HepG2 (cell line): ENCODE measurements at regions of chrX and their contacts with region 1.

Region 1: GRCh38 chrX:24241822-24242648 is 71.8 kb downstream of the SUPT20HL2 start:
- DNase-seq: peak; percentile 31
- ATAC-seq: peak; percentile 78
- H3K4me3 ChIP-seq: peak overlapping the region in 1 of 3 experiments; percentile 41; a peak in 1 of 6 replicates
- H3K27ac ChIP-seq: no peak overlapping the region
- H3K4me1 ChIP-seq: peaks cover 38% of the 10 kb centered on the region
- H3K27me3 ChIP-seq: no peaks in the 10 kb centered on the region
- CTCF ChIP-seq: peak; percentile 56
- EP300 ChIP-seq: no peak
- POLR2A ChIP-seq: no peak
- RAD21 ChIP-seq: no peak

Region 2: DNA sequence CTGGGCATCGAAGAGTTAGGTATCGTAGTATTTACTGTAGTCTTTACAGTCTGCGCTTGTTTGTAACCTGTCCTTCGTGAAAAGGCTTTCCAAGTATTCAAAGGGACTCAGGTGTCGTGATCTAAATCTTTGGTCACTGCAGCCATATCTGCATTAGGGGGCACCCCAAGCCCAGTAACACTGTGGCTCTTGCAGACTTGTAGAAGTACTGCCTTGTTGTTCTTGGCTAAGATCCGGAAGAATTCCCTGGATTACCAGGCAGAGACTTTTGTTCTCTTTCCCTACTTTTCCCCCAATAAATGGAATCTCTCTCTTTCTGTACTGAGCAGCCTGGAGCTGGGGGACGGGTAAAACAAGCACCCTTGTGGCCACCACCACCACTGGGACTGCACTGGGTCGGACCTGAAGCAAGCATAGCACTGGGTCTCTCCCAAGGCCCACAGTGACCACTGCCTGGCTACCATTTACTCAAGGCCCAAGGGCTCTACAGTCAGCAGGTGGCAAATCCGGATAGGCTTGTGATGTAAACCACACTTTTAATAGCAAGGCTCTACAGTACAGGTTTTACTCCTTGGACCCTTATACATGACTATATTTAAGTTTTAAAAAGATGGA is 322.2 kb before region 1 on chrX:
- CTCF ChIA-PET with region 1: no interaction called
- POLR2A ChIA-PET with region 1: no interaction called
- in situ Hi-C with region 1: no loop called
- intact Hi-C with region 1: loop called (anchors 10 kb)
- DNase-seq: peak; percentile 30
- ATAC-seq: peak; percentile 84
- H3K4me3 ChIP-seq: no peak overlapping the region; a peak in 2 of 6 replicates
- H3K27ac ChIP-seq: no peak overlapping the region
- H3K4me1 ChIP-seq: no peaks in the 10 kb centered on the region
- H3K27me3 ChIP-seq: no peaks in the 10 kb centered on the region
- CTCF ChIP-seq: peak; percentile 65
- EP300 ChIP-seq: no peak
- POLR2A ChIP-seq: no peak
- RAD21 ChIP-seq: no peak

Region 3: DNA sequence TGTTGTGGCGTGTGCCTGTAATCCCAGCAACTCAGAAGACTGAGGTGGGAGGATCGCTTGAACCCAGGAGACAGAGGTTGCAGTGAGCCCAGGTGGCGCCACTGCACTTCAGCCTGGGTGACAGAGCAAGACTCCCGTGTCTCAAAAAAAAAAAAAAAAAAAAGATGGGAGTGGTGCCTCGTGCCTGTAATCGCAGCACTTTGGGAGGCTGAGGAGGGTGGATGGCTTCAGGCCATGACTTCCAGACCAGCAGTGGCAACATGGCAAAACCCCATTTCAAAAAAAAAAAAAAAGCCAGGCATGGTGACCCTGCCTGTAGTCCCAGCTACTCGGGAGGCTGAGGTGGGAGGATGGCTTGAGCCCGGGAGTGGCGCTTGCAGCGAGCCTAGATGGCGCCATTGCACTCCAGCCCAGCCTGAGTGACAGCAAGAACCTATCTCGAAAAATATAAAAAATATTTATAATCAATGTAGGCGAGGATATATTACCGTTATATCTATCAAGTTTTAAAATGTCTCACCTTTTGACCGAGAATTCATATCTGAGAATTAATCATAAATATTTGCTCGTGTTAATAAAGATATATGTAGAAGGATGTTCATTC is 160.3 kb before region 1 on chrX:
- CTCF ChIA-PET with region 1: interaction called, 10 read pairs
- POLR2A ChIA-PET with region 1: no interaction called
- in situ Hi-C with region 1: loop called (anchors 5 kb)
- intact Hi-C with region 1: loop called (anchors 2 kb)
- DNase-seq: peak; percentile 44
- ATAC-seq: peak; percentile 87
- H3K4me3 ChIP-seq: no peak overlapping the region
- H3K27ac ChIP-seq: no peak overlapping the region
- H3K4me1 ChIP-seq: no peaks in the 10 kb centered on the region
- H3K27me3 ChIP-seq: no peaks in the 10 kb centered on the region
- CTCF ChIP-seq: peak; percentile 62
- EP300 ChIP-seq: no peak
- POLR2A ChIP-seq: no peak
- RAD21 ChIP-seq: no peak